ENCODE measurements at regions of chr21 and their contacts with region 1.

Region 1: GRCh38 chr21:31580866-31581276 is 78.6 kb upstream of the SOD1 start:
- DNase-seq: peak; percentile 83
- H3K4me3 Mint-ChIP-seq: no peak overlapping the region
- H3K27ac Mint-ChIP-seq: no peak overlapping the region
- H3K4me1 Mint-ChIP-seq: no peaks in the 10 kb centered on the region
- H3K27me3 Mint-ChIP-seq: peaks cover 22% of the 10 kb centered on the region

Region 2: GRCh38 chr21:31098576-31099005 is 482.3 kb before region 1 on chr21:
- CTCF ChIA-PET with region 1: interaction called, 12 read pairs
- POLR2A ChIA-PET with region 1: no interaction called
- DNase-seq: peak; percentile 77
- H3K4me3 Mint-ChIP-seq: no peak overlapping the region
- H3K27ac Mint-ChIP-seq: no peak overlapping the region
- H3K4me1 Mint-ChIP-seq: peaks cover 26% of the 10 kb centered on the region
- H3K27me3 Mint-ChIP-seq: peaks cover 4% of the 10 kb centered on the region

Region 3: GRCh38 chr21:31213795-31214194 is 367.1 kb before region 1 on chr21:
- CTCF ChIA-PET with region 1: interaction called, 10 read pairs
- POLR2A ChIA-PET with region 1: no interaction called
- DNase-seq: peak; percentile 24
- H3K4me3 Mint-ChIP-seq: no peak overlapping the region
- H3K27ac Mint-ChIP-seq: no peak overlapping the region
- H3K4me1 Mint-ChIP-seq: no peaks in the 10 kb centered on the region
- H3K27me3 Mint-ChIP-seq: no peaks in the 10 kb centered on the region

Region 4: DNA sequence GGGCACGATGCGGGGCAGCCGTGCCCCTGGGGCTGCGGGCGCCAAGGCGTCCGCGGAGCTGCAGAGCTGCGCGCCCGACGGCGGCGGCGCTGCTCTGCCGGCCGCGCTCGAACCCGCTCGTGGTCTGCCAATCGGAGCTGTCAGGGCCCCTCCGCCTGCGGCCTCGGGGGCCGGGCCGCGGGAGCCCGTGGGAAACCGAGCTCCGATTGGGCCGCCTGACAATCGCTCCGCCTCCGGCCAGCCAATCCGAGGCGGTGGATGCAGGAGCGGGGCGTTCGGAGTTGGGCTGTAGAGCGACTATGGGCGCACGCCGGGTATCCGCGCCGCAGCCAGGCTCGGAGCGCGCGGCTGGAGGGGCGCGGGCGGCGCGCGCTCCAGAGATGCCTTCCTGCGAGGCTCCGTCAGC is 21.9 kb before region 1 on chr21:
- CTCF ChIA-PET with region 1: interaction called, 15 read pairs
- POLR2A ChIA-PET with region 1: no interaction called
- DNase-seq: peak; percentile 94
- H3K4me3 Mint-ChIP-seq: peak overlapping the region; percentile 83
- H3K27ac Mint-ChIP-seq: no peak overlapping the region
- H3K4me1 Mint-ChIP-seq: peaks cover 45% of the 10 kb centered on the region
- H3K27me3 Mint-ChIP-seq: peaks cover 28% of the 10 kb centered on the region

Region 5: GRCh38 chr21:31604591-31605190 is 23.8 kb after region 1 on chr21:
- CTCF ChIA-PET with region 1: no interaction called
- POLR2A ChIA-PET with region 1: no interaction called
- DNase-seq: peak; percentile 76
- H3K4me3 Mint-ChIP-seq: no peak overlapping the region
- H3K27ac Mint-ChIP-seq: no peak overlapping the region
- H3K4me1 Mint-ChIP-seq: peaks cover 3% of the 10 kb centered on the region
- H3K27me3 Mint-ChIP-seq: no peaks in the 10 kb centered on the region

Region 6: GRCh38 chr21:31665397-31665796 is 84.5 kb after region 1 on chr21:
- CTCF ChIA-PET with region 1: no interaction called
- POLR2A ChIA-PET with region 1: no interaction called
- DNase-seq: peak; percentile 25
- H3K4me3 Mint-ChIP-seq: no peak overlapping the region
- H3K27ac Mint-ChIP-seq: peak overlapping the region; percentile 20
- H3K4me1 Mint-ChIP-seq: peaks cover 77% of the 10 kb centered on the region
- H3K27me3 Mint-ChIP-seq: no peaks in the 10 kb centered on the region